ENCODE measurements at regions of chr4 and their contacts with region 1.

Region 1: GRCh38 chr4:40149960-40150385 is 46.9 kb upstream of the RHOH start:
- DNase-seq: peak; percentile 51 to 89 (median 61)
- ATAC-seq: peak; percentile 88
- H3K4me3 ChIP-seq: no peak overlapping the region
- H3K4me3 Mint-ChIP-seq: no peak overlapping the region
- H3K27ac ChIP-seq: no peak overlapping the region
- H3K27ac Mint-ChIP-seq: peak overlapping the region; percentile 66
- H3K4me1 ChIP-seq: peaks cover 2% of the 10 kb centered on the region
- H3K4me1 Mint-ChIP-seq: peaks cover 45% of the 10 kb centered on the region
- H3K27me3 ChIP-seq: no peaks in the 10 kb centered on the region
- H3K27me3 Mint-ChIP-seq: no peaks in the 10 kb centered on the region
- CTCF ChIP-seq: peak; percentile 89

Region 2: GRCh38 chr4:40182001-40182400 is 32.0 kb after region 1 on chr4:
- CTCF ChIA-PET with region 1: no interaction called
- POLR2A ChIA-PET with region 1: no interaction called
- intact Hi-C with region 1: no loop called
- DNase-seq: no peak
- ATAC-seq: no peak
- H3K4me3 ChIP-seq: no peak overlapping the region
- H3K4me3 Mint-ChIP-seq: no peak overlapping the region
- H3K27ac ChIP-seq: no peak overlapping the region
- H3K27ac Mint-ChIP-seq: no peak overlapping the region
- H3K4me1 ChIP-seq: peaks cover 11% of the 10 kb centered on the region
- H3K4me1 Mint-ChIP-seq: peaks cover 35% of the 10 kb centered on the region
- H3K27me3 ChIP-seq: no peaks in the 10 kb centered on the region
- H3K27me3 Mint-ChIP-seq: no peaks in the 10 kb centered on the region
- CTCF ChIP-seq: no peak

Region 3: GRCh38 chr4:40193016-40193571 is 43.1 kb after region 1 on chr4:
- CTCF ChIA-PET with region 1: interaction called, 3 read pairs
- POLR2A ChIA-PET with region 1: interaction called, 13 read pairs
- intact Hi-C with region 1: loop called (anchors 1 to 5 kb)
- DNase-seq: peak in 8 of 14 experiments; percentile 43 to 79 (median 51)
- ATAC-seq: peak; percentile 25
- H3K4me3 ChIP-seq: peak overlapping the region; percentile 74
- H3K4me3 Mint-ChIP-seq: peak overlapping the region; percentile 94
- H3K27ac ChIP-seq: peak overlapping the region; percentile 67 to 99
- H3K27ac Mint-ChIP-seq: peak overlapping the region; percentile 99
- H3K4me1 ChIP-seq: peaks cover 43% of the 10 kb centered on the region
- H3K4me1 Mint-ChIP-seq: peaks cover 72% of the 10 kb centered on the region
- H3K27me3 ChIP-seq: no peaks in the 10 kb centered on the region
- H3K27me3 Mint-ChIP-seq: peaks cover 5% of the 10 kb centered on the region
- CTCF ChIP-seq: no peak

Region 4: DNA sequence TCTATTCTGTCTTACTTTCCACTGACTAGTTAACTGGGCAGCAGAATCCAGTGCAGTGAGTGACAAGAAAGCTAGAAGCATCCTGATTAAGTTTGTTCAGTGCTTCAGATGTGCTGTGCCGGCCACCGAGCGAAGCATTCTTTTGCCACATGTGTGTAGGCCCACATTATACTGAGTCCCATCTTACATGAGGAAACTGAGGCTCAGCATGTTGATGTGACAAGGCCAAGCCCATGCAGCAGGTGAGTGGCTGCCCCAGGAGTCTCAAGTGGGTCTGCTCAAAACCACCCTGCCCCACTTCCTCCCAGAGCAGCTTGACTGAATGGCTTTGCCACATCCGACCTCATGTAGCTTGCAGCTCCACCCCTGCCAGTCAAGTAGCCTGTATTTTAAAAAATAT is 97.4 kb after region 1 on chr4:
- CTCF ChIA-PET with region 1: no interaction called
- POLR2A ChIA-PET with region 1: no interaction called
- intact Hi-C with region 1: loop called (anchors 2 to 10 kb)
- DNase-seq: peak; percentile 51 to 87 (median 66)
- ATAC-seq: peak; percentile 81
- H3K4me3 ChIP-seq: no peak overlapping the region
- H3K4me3 Mint-ChIP-seq: peak overlapping the region; percentile 45
- H3K27ac ChIP-seq: peak overlapping the region; percentile 71 to 72
- H3K27ac Mint-ChIP-seq: peak overlapping the region; percentile 93
- H3K4me1 ChIP-seq: peaks cover 84% of the 10 kb centered on the region
- H3K4me1 Mint-ChIP-seq: peaks cover 88% of the 10 kb centered on the region
- H3K27me3 ChIP-seq: no peaks in the 10 kb centered on the region
- H3K27me3 Mint-ChIP-seq: no peaks in the 10 kb centered on the region
- CTCF ChIP-seq: no peak

Region 5: GRCh38 chr4:40316782-40317635 is 167.0 kb after region 1 on chr4:
- CTCF ChIA-PET with region 1: interaction called, 6 read pairs
- POLR2A ChIA-PET with region 1: interaction called, 21 read pairs
- intact Hi-C with region 1: loop called in 1 of 2 experiments (anchors 2 kb)
- DNase-seq: peak in 13 of 14 experiments; percentile 34 to 88 (median 54)
- ATAC-seq: peak; percentile 67
- H3K4me3 ChIP-seq: peak overlapping the region; percentile 54
- H3K4me3 Mint-ChIP-seq: peak overlapping the region; percentile 83
- H3K27ac ChIP-seq: peak overlapping the region; percentile 69 to 80
- H3K27ac Mint-ChIP-seq: peak overlapping the region; percentile 91
- H3K4me1 ChIP-seq: peaks cover 20% of the 10 kb centered on the region
- H3K4me1 Mint-ChIP-seq: peaks cover 57% of the 10 kb centered on the region
- H3K27me3 ChIP-seq: no peaks in the 10 kb centered on the region
- H3K27me3 Mint-ChIP-seq: no peaks in the 10 kb centered on the region
- CTCF ChIP-seq: peak; percentile 86

Region 6: DNA sequence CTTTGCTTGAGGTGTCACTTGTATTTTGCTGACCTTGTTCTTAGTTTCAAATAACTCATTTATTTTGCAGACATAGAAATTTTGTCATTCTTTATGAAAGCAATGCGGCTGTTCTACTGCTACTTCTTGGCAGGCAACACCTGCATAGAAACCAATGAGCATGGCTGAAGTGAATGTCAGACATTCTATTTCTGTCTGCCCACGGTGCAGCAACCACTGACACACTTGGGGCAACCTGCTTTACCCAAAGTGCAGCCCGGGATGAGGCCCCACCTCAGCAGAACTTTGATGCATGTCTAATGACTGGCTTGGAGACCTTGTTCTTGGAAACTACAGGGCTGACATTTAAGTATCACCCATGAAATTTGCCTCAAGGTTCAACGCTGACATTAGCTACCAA is 386.1 kb after region 1 on chr4:
- CTCF ChIA-PET with region 1: no interaction called
- POLR2A ChIA-PET with region 1: no interaction called
- intact Hi-C with region 1: no loop called
- DNase-seq: no peak
- ATAC-seq: no peak
- H3K4me3 ChIP-seq: no peak overlapping the region
- H3K4me3 Mint-ChIP-seq: no peak overlapping the region
- H3K27ac ChIP-seq: no peak overlapping the region
- H3K27ac Mint-ChIP-seq: no peak overlapping the region
- H3K4me1 ChIP-seq: no peaks in the 10 kb centered on the region
- H3K4me1 Mint-ChIP-seq: no peaks in the 10 kb centered on the region
- H3K27me3 ChIP-seq: no peaks in the 10 kb centered on the region
- H3K27me3 Mint-ChIP-seq: no peaks in the 10 kb centered on the region
- CTCF ChIP-seq: no peak

Region 7: GRCh38 chr4:40550948-40551462 is 401.0 kb after region 1 on chr4:
- CTCF ChIA-PET with region 1: no interaction called
- POLR2A ChIA-PET with region 1: no interaction called
- intact Hi-C with region 1: loop called in 1 of 2 experiments (anchors 2 kb)
- DNase-seq: peak in 10 of 14 experiments; percentile 1 to 65 (median 8)
- ATAC-seq: peak; percentile 88
- H3K4me3 ChIP-seq: peak overlapping the region; percentile 30
- H3K4me3 Mint-ChIP-seq: peak overlapping the region; percentile 87
- H3K27ac ChIP-seq: peak overlapping the region; percentile 16 to 40
- H3K27ac Mint-ChIP-seq: peak overlapping the region; percentile 87
- H3K4me1 ChIP-seq: peaks cover 11% of the 10 kb centered on the region
- H3K4me1 Mint-ChIP-seq: peaks cover 12% of the 10 kb centered on the region
- H3K27me3 ChIP-seq: no peaks in the 10 kb centered on the region
- H3K27me3 Mint-ChIP-seq: no peaks in the 10 kb centered on the region
- CTCF ChIP-seq: peak; percentile 33

Measured in CD4-positive, alpha-beta T cell (primary cell).